Activated CD4-positive, alpha-beta memory T cell treated with anti-CD3 and anti-CD28 coated beads for 36 hours (primary cell): ENCODE measurements at regions of chr11 and their contacts with region 1.

Region 1: DNA sequence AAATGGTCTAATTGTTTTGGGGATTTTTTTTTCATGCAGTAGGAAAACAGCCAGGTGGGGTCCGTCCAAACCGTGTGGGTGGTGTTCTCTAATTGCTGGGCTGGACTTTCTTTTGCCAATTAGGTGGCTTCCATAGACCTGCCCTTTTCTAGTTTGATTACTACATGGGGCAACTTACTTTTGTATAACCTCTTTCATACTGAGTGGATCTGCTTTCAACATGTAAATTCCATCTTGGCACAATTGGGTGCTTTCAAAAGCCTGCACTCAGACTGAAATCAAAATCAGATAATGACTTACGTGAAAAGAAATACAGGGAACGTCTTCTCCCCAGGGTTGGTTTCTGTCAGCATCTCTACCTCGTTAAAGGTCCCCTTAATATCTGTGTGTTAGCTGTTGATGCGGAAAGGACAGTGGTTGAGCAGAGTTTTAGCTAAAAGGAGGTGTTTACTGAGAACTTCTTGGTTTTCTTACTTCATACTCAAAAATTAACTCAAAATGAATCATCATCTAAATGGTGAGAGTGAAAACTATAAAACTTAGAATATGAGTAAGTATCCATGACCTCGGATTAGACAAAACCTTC is 72.1 kb downstream of the BARX2 start:
- DNase-seq: no peak
- H3K4me3 Mint-ChIP-seq: no peak overlapping the region
- H3K27ac Mint-ChIP-seq: no peak overlapping the region
- H3K4me1 Mint-ChIP-seq: peaks cover 8% of the 10 kb centered on the region
- H3K27me3 Mint-ChIP-seq: peaks cover 8% of the 10 kb centered on the region

Region 2: DNA sequence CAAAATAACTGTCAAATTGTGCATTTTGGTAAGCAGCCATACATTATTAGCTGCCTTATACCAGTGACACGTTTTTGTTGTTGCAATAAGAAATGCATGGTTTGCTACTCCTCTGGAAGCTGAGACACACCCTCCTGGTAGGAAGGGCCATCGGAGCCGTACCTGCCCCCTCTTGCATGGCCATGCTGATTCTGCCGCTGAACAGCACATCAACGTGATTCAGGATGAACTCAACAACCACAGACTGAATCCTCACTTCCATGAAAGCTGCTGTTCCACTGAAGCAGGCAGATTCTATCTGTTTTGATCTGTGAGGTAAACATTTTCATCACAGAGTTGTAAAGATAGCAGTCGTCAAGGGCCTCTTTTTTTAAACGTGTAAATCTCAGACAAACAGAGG is 466.5 kb before region 1 on chr11:
- CTCF ChIA-PET with region 1: no interaction called
- POLR2A ChIA-PET with region 1: no interaction called
- intact Hi-C with region 1: no loop called
- DNase-seq: no peak
- H3K4me3 Mint-ChIP-seq: no peak overlapping the region
- H3K27ac Mint-ChIP-seq: no peak overlapping the region
- H3K4me1 Mint-ChIP-seq: peaks cover 5% of the 10 kb centered on the region
- H3K27me3 Mint-ChIP-seq: no peaks in the 10 kb centered on the region

Region 3: DNA sequence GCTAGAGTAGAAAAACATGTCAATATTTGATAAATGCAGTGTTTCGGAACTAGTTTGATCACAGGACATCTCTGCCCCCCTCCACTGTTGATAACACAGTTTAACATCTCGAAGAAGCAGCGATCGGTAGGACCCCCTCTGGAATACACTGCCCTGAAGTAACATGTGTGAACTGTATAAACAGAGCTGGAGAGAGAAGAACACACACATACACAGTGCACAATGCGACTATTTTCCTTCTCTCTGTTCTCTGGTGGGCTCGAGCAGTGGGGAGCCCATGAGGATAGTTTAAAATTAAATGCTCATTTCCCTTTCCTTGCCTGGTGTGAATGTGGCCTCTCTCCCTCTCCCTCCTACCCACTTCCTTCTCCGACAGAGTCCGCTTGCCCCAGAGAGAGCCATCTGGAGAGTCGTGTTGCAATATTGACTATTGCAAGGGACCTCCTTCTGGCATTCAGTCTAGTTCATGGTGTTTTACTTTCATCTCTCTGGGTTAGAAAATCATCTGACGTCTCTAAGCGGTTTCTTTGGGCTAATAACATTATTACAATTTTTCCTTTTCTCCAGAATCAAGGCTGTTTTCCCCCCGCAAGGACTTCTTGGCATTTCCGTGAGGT is 123.7 kb before region 1 on chr11:
- CTCF ChIA-PET with region 1: no interaction called
- POLR2A ChIA-PET with region 1: no interaction called
- intact Hi-C with region 1: no loop called
- DNase-seq: no peak
- H3K4me3 Mint-ChIP-seq: no peak overlapping the region
- H3K27ac Mint-ChIP-seq: no peak overlapping the region
- H3K4me1 Mint-ChIP-seq: no peaks in the 10 kb centered on the region
- H3K27me3 Mint-ChIP-seq: no peaks in the 10 kb centered on the region

Region 4: DNA sequence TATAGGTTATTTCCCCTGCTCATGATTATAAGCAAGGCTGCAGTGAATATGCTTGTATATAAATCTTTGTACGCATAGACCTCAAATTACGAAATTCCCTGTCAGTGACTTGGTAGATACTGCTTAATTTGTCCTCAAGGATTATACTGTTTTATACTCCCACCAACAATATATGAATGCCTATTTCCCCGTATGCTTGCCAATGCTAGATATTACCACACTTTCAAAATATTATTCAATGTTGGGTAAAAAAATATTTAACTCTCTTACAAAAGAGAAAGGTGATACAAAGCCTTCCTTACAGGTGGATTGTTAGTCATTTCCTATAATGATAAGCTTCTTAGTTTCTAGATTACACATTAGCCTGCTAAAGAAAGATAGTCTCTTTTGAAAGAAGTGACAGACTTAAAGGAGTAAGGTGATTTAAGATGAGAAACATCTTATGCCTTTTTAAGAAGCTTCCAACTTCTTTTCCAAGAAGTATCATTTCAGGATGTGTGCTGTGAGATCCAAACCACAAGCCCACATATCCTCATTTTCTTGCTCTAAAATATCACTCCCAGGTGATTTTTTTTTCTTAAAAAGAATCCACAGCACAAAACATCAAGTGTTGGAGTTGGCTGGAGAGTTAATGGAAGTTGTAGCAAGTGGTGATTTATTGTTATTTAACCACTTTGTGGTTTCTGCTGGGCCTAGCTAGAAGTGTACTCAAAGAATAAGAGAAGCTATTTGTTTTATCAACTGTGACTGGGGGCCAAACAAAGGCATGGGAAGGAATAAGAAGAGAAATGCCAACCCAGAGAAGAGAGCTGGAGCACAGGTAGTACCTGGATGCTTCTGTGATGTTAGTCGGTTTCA is 12.9 kb before region 1 on chr11:
- CTCF ChIA-PET with region 1: interaction called, 3 read pairs
- POLR2A ChIA-PET with region 1: no interaction called
- intact Hi-C with region 1: loop called (anchors 1 kb)
- DNase-seq: no peak
- H3K4me3 Mint-ChIP-seq: no peak overlapping the region
- H3K27ac Mint-ChIP-seq: no peak overlapping the region
- H3K4me1 Mint-ChIP-seq: peaks cover 9% of the 10 kb centered on the region
- H3K27me3 Mint-ChIP-seq: peaks cover 12% of the 10 kb centered on the region